Posterior cingulate gyrus (tissue), 11 donors: ENCODE measurements at regions of chr20 and their contacts with region 1.

Region 1: DNA sequence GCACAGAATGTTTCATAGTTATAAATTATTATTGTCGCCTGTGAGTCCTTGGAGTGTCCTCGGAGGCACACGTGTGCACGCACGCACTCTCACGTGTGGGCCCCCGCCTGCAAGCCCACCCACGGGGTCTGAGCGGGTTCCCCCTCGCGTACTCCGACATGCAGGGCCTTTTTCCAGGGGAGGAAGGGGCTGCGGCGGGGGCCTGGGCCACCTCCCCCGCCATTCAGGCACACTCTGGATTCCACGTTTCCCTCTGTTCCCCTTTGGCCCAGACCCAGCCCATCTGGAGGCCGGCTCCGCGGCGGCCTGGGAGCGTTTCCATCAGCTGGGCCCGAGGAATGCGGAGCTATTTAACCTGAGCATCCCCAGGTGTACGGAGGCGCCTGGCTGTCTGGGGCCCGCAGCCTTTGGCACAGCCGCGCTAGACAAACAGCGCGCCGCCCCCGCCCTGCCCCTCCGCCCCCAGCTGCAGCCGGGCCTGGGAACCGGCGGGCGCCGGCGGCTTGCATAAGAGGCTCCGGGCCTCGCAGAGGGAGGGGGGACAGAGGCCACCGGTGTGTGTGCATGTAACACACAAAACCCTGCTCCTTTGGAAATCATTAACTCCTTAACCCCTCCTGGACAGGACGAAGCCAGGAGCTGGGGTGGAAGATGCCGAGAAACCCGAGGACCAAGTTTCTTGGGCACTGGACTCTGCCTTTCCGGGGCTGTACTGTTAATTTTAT is 3.3 kb downstream of the ID1 start:
- DNase-seq: peak in 7 of 10 donors; percentile 34 to 91 (median 41)

Region 2: GRCh38 chr20:31494131-31494530 is 114.3 kb before region 1 on chr20:
- intact Hi-C with region 1: no loop called
- DNase-seq: no peak

Region 3: DNA sequence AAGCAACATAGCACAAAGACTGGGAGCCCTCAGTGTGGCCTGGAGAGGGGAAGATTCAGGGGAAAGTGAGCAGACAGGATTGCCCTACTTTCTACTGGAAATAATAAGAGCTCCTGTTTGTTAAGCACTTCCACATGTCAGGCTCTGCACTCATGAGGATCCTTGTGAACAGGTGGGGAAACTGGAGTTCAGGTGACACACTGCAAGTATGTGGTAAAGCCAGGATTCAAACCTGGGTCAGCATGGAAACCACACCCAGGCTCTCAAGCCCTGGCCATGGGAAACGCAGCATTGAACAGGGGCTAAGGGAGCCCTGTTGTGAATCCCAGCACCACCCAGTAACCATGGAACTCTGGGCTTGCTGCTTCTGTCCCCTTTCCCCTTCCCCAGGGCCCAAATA is 46.2 kb before region 1 on chr20:
- intact Hi-C with region 1: loop called (anchors 2 kb)
- DNase-seq: peak in 1 of 10 donors; percentile 7